Posterior vena cava (tissue), 2 donors: ENCODE measurements at regions of chr21 and their contacts with region 1.

Region 1: DNA sequence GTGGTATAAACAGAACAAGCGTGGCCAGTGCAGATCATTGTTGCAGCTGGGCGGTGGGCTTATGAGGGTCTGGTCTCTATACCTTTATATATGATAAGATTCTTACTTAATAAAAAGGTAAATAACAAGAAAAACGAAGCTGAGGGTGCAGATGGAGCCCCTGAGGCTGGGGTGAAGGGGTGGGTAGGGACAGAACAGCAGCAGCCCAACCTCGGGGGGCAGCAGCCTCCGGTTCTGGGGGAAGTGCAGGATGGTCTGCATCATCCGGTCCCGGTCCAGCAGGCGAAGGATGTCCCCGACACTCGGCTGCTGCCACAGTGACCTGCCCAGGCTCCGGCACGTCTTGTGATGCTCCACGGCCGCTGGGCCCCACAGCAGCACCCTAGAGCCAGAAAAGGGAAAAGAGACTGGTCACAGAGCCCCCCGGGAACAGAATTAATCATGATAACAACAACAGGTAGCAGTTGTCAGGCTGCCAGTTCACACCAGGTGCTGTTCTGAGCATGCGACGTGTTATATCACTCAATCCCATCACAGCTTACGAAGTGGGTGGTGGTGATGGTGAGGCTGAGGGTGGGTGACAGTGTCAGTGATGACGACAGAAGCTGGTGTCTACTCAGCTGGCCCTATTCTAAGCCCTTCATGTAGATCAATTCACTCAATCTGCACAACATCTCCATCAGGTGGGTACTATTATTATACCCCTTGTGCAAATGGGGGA is 35.5 kb downstream of the MRAP start:
- DNase-seq: no peak

Region 2: DNA sequence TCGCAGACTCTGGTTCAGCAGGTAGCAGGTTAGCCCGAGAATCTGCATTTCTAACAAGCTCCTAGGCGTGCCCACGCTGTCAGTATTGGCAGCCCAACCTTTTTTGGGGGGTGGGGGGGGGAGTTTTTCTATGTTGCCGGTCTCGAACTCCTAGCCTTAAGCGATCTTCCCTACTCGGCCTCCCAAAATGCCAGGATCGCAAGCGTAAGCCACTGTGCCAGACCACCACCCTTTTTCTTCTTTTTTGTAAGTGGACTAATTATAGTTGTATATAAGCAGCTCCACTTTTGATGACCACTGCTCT is 54.8 kb before region 1 on chr21:
- intact Hi-C with region 1: loop called in 1 of 2 experiments (anchors 1 kb)
- DNase-seq: no peak